CD4-positive, alpha-beta T cell (primary cell): ENCODE measurements at regions of chr14 and their contacts with region 1.

Region 1: GRCh38 chr14:91060351-91061055 is at the start of gene RPS6KA5:
- DNase-seq: peak; percentile 99 to 100 (median 100)
- ATAC-seq: peak; percentile 81
- H3K4me3 ChIP-seq: peak within 1 kb of the TSS; percentile 81
- H3K4me3 Mint-ChIP-seq: peak within 1 kb of the TSS; percentile 88
- H3K27ac ChIP-seq: peak within 1 kb of the TSS; percentile 80 to 91
- H3K27ac Mint-ChIP-seq: peak within 1 kb of the TSS; percentile 81
- H3K4me1 ChIP-seq: peaks cover 51% of the 10 kb centered on the region
- H3K4me1 Mint-ChIP-seq: peaks cover 64% of the 10 kb centered on the region
- H3K27me3 ChIP-seq: no peaks in the 10 kb centered on the region
- H3K27me3 Mint-ChIP-seq: no peaks in the 10 kb centered on the region
- CTCF ChIP-seq: no peak
- total RNA-seq, gene RPS6KA5: 28.0 to 29.8 TPM

Region 2: DNA sequence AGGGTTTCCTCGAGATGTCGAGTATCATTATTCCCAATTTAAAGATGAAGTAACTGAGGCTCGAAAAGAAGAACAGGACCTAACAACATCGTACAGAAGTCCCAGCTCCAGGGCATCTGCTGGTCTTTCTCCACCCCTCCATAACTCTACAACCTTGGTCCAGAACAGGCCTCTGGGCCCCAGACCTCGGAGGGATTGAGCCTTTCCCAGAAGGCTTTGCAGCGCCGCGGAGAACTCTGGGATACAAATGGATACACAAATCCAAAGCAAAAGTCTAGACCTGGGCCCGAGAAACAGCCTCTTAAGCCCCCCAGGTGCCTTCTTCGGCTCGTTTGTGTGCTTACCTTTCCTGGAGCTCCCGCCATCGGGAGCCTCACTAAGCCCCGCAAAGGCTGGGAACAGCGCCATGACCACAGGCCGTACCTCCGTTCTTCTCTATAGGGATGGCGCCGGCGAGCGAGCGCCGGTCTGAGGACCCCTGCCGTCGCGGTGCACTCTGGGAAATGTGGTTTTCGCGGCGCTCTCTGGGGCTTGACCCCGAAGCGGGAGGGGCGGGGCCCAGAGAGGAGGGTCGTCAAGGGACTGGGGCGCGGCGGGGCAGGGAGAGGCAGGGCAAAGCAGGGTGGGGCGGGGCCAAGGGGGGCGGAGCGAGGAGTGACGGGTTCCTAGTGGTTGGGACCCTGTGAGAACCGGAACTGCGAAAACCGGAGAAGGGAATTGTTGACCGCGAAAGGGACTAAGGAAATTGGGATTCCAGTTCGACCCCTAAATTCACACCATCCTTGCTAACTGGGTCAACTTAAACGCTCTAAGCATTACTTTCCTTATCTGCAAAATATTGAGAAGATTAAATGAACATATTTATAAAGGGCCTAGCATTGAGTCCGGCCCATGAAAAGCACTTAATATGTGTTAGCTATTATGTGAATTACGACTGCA is 728.7 kb before region 1 on chr14 and contains the start of gene NRDE2:
- CTCF ChIA-PET with region 1: no interaction called
- POLR2A ChIA-PET with region 1: no interaction called
- intact Hi-C with region 1: no loop called
- DNase-seq: peak; percentile 81 to 99 (median 93)
- ATAC-seq: peak; percentile 95
- H3K4me3 ChIP-seq: peak within 1 kb of the TSS; percentile 83
- H3K4me3 Mint-ChIP-seq: peak within 1 kb of the TSS; percentile 93
- H3K27ac ChIP-seq: peak within 1 kb of the TSS; percentile 60 to 72
- H3K27ac Mint-ChIP-seq: peak within 1 kb of the TSS; percentile 93
- H3K4me1 ChIP-seq: peaks cover 13% of the 10 kb centered on the region
- H3K4me1 Mint-ChIP-seq: peaks cover 40% of the 10 kb centered on the region
- H3K27me3 ChIP-seq: no peaks in the 10 kb centered on the region
- H3K27me3 Mint-ChIP-seq: peaks cover 11% of the 10 kb centered on the region
- CTCF ChIP-seq: no peak
- total RNA-seq, gene NRDE2: 17.5 to 17.9 TPM

Region 3: GRCh38 chr14:90383075-90383730 is 677.3 kb before region 1 on chr14:
- CTCF ChIA-PET with region 1: no interaction called
- POLR2A ChIA-PET with region 1: interaction called, 11 read pairs
- intact Hi-C with region 1: no loop called
- DNase-seq: peak; percentile 93 to 99 (median 97)
- ATAC-seq: peak; percentile 74
- H3K4me3 ChIP-seq: peak overlapping the region; percentile 83
- H3K4me3 Mint-ChIP-seq: no peak overlapping the region
- H3K27ac ChIP-seq: peak overlapping the region; percentile 95 to 98
- H3K27ac Mint-ChIP-seq: no peak overlapping the region
- H3K4me1 ChIP-seq: peaks cover 35% of the 10 kb centered on the region
- H3K4me1 Mint-ChIP-seq: peaks cover 23% of the 10 kb centered on the region
- H3K27me3 ChIP-seq: no peaks in the 10 kb centered on the region
- H3K27me3 Mint-ChIP-seq: no peaks in the 10 kb centered on the region
- CTCF ChIP-seq: no peak

Region 4: DNA sequence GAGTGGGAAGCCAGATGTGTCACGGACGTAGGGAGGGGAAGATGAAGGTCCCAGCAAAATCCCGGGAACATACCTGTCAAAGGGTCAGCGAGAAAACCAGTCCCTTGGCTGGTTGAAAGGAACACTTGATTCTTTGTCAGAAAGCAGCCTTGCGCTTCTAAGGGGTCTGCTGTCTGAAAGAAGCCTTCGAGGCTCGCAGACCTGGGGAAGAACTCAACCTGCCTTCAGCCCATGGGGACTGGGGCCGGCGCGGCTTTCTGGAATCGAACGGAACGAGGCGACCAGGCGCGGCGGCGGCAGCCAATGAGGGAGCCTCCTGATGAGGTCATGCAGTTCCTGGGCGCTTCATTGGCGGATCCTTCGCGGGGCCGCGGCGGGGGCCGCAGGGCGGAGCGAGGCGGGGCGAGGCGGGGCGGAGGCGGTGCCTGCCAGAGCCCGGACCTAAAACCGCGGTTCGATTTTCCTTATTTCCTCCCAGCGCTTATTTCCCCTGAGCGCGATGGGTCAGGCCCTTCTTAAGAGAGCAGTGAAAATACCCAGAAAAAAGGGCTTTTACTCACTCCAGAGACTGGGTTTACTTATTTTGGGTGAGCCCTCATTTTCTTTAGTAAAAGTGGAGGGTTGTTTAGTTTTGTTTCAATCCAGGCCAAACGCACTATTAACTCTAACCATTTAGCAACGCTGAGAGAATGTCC is 232.4 kb before region 1 on chr14:
- CTCF ChIA-PET with region 1: no interaction called
- POLR2A ChIA-PET with region 1: no interaction called
- intact Hi-C with region 1: loop called in 1 of 2 experiments (anchors 5 kb)
- DNase-seq: peak; percentile 76 to 95 (median 84)
- ATAC-seq: peak; percentile 99
- H3K4me3 ChIP-seq: peak overlapping the region; percentile 49
- H3K4me3 Mint-ChIP-seq: peak overlapping the region; percentile 67
- H3K27ac ChIP-seq: peak overlapping the region in 1 of 2 donors; percentile 67
- H3K27ac Mint-ChIP-seq: peak overlapping the region; percentile 64
- H3K4me1 ChIP-seq: peaks cover 17% of the 10 kb centered on the region
- H3K4me1 Mint-ChIP-seq: peaks cover 18% of the 10 kb centered on the region
- H3K27me3 ChIP-seq: no peaks in the 10 kb centered on the region
- H3K27me3 Mint-ChIP-seq: no peaks in the 10 kb centered on the region
- CTCF ChIP-seq: no peak

Region 5: GRCh38 chr14:91078095-91078737 is 17.7 kb after region 1 on chr14:
- CTCF ChIA-PET with region 1: no interaction called
- POLR2A ChIA-PET with region 1: interaction called, 35 read pairs
- intact Hi-C with region 1: loop called in 1 of 2 experiments (anchors 1 kb)
- DNase-seq: peak in 8 of 14 experiments; percentile 8 to 90 (median 47)
- ATAC-seq: peak; percentile 99
- H3K4me3 ChIP-seq: no peak overlapping the region
- H3K4me3 Mint-ChIP-seq: peak overlapping the region; percentile 9
- H3K27ac ChIP-seq: peak overlapping the region in 1 of 2 donors; percentile 29
- H3K27ac Mint-ChIP-seq: peak overlapping the region; percentile 37
- H3K4me1 ChIP-seq: peaks cover 29% of the 10 kb centered on the region
- H3K4me1 Mint-ChIP-seq: peaks cover 30% of the 10 kb centered on the region
- H3K27me3 ChIP-seq: no peaks in the 10 kb centered on the region
- H3K27me3 Mint-ChIP-seq: no peaks in the 10 kb centered on the region
- CTCF ChIP-seq: no peak

Region 6: GRCh38 chr14:91114079-91115065 is 53.9 kb after region 1 on chr14:
- CTCF ChIA-PET with region 1: interaction called, 4 read pairs
- POLR2A ChIA-PET with region 1: interaction called, 181 read pairs
- intact Hi-C with region 1: loop called (anchors 2 kb)
- DNase-seq: peak; percentile 30 to 89 (median 54)
- ATAC-seq: peak; percentile 77
- H3K4me3 ChIP-seq: peak overlapping the region; percentile 62
- H3K4me3 Mint-ChIP-seq: peak overlapping the region; percentile 92
- H3K27ac ChIP-seq: peak overlapping the region; percentile 83 to 88
- H3K27ac Mint-ChIP-seq: peak overlapping the region; percentile 91
- H3K4me1 ChIP-seq: peaks cover 65% of the 10 kb centered on the region
- H3K4me1 Mint-ChIP-seq: peaks cover 74% of the 10 kb centered on the region
- H3K27me3 ChIP-seq: no peaks in the 10 kb centered on the region
- H3K27me3 Mint-ChIP-seq: no peaks in the 10 kb centered on the region
- CTCF ChIP-seq: no peak

Region 7: GRCh38 chr14:91177073-91178034 is 116.9 kb after region 1 on chr14:
- CTCF ChIA-PET with region 1: interaction called, 9 read pairs
- POLR2A ChIA-PET with region 1: interaction called, 5 read pairs
- intact Hi-C with region 1: loop called in 1 of 2 experiments (anchors 2 kb)
- DNase-seq: peak; percentile 47 to 89 (median 58)
- ATAC-seq: peak; percentile 93
- H3K4me3 ChIP-seq: no peak overlapping the region
- H3K4me3 Mint-ChIP-seq: no peak overlapping the region
- H3K27ac ChIP-seq: peak overlapping the region in 1 of 2 donors; percentile 40
- H3K27ac Mint-ChIP-seq: peak overlapping the region; percentile 47
- H3K4me1 ChIP-seq: peaks cover 17% of the 10 kb centered on the region
- H3K4me1 Mint-ChIP-seq: peaks cover 17% of the 10 kb centered on the region
- H3K27me3 ChIP-seq: no peaks in the 10 kb centered on the region
- H3K27me3 Mint-ChIP-seq: no peaks in the 10 kb centered on the region
- CTCF ChIP-seq: peak; percentile 91

Region 8: GRCh38 chr14:91220581-91221274 is 160.2 kb after region 1 on chr14:
- CTCF ChIA-PET with region 1: no interaction called
- POLR2A ChIA-PET with region 1: no interaction called
- intact Hi-C with region 1: no loop called
- DNase-seq: no peak
- ATAC-seq: no peak
- H3K4me3 ChIP-seq: no peak overlapping the region
- H3K4me3 Mint-ChIP-seq: no peak overlapping the region
- H3K27ac ChIP-seq: peak overlapping the region in 1 of 2 donors; percentile 24
- H3K27ac Mint-ChIP-seq: no peak overlapping the region
- H3K4me1 ChIP-seq: peaks cover 37% of the 10 kb centered on the region
- H3K4me1 Mint-ChIP-seq: peaks cover 48% of the 10 kb centered on the region
- H3K27me3 ChIP-seq: no peaks in the 10 kb centered on the region
- H3K27me3 Mint-ChIP-seq: no peaks in the 10 kb centered on the region
- CTCF ChIP-seq: no peak

Region 9: DNA sequence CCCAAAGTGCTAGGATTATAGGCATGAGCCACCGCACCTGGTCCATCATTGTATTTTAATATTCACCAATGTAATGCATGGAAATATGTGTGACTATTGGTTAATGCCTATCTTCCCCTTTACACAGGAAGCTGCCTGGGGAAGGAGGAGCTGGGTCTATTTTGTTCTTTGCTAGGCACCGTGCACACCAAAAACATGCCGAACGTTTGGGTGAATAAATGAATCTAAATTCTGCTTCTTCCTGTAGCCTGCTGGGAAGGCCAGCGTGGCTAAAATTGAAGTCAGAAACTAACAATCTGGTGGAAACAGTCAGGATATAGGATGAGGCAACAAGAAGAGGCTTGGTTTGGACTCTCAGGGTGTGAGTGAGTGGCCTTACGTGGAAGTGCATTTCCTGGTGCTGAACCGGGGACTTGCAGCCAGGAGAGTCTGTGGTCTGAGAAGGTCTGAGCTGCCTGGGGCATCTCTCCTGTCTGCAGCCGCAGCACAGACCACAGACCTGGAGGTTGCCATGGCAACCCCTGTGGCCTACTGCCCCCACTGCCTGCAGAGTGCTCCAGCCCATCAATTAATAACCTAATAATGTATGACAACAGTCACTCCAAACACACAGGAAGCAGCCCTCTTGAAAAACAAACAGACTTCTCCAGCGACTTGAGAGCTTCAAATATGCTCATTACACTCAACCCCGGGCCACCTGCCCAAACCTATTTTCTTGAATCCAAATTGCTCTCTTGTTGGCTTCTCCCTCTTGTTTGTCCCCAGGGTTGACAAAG is 189.5 kb after region 1 on chr14:
- CTCF ChIA-PET with region 1: no interaction called
- POLR2A ChIA-PET with region 1: no interaction called
- intact Hi-C with region 1: loop called (anchors 2 to 10 kb)
- DNase-seq: peak in 7 of 14 experiments; percentile 27 to 81 (median 52)
- ATAC-seq: no peak
- H3K4me3 ChIP-seq: no peak overlapping the region
- H3K4me3 Mint-ChIP-seq: peak overlapping the region; percentile 79
- H3K27ac ChIP-seq: peak overlapping the region; percentile 59 to 68
- H3K27ac Mint-ChIP-seq: peak overlapping the region; percentile 78
- H3K4me1 ChIP-seq: peaks cover 96% of the 10 kb centered on the region
- H3K4me1 Mint-ChIP-seq: peaks cover 87% of the 10 kb centered on the region
- H3K27me3 ChIP-seq: no peaks in the 10 kb centered on the region
- H3K27me3 Mint-ChIP-seq: no peaks in the 10 kb centered on the region
- CTCF ChIP-seq: no peak